A549 (cell line): ENCODE measurements at regions of chr18 and their contacts with region 1.

Region 1: GRCh38 chr18:61581578-61582201 is 248.5 kb downstream of the CDH20 start:
- DNase-seq: peak; percentile 35 to 55
- ATAC-seq: peak; percentile 96 to 99
- H3K4me3 ChIP-seq: peak overlapping the region; percentile 24; the same call in 1 of the 3 replicates
- H3K27ac ChIP-seq: no peak overlapping the region
- H3K4me1 ChIP-seq: no peaks in the 10 kb centered on the region
- CTCF ChIP-seq: peak; percentile 68
- EP300 ChIP-seq: no peak
- POLR2A ChIP-seq: no peak
- RAD21 ChIP-seq: peak; percentile 57 to 73

Region 2: GRCh38 chr18:61596296-61596695 is 14.6 kb after region 1 on chr18:
- CTCF ChIA-PET with region 1: interaction called, 16 read pairs
- POLR2A ChIA-PET with region 1: no interaction called
- DNase-seq: no peak
- ATAC-seq: no peak
- H3K4me3 ChIP-seq: no peak overlapping the region
- H3K27ac ChIP-seq: no peak overlapping the region
- H3K4me1 ChIP-seq: no peaks in the 10 kb centered on the region
- CTCF ChIP-seq: no peak
- EP300 ChIP-seq: no peak
- POLR2A ChIP-seq: no peak
- RAD21 ChIP-seq: no peak